Heart left ventricle (tissue), 16 donors: ENCODE measurements at regions of chr17 and their contacts with region 1.

Region 1: GRCh38 chr17:76726231-76726775 is at the start of gene JMJD6:
- DNase-seq: peak; percentile 97 to 98 (median 98)
- ATAC-seq: peak; percentile 93 to 96 (median 95)
- H3K4me3 ChIP-seq: peak within 1 kb of the TSS; percentile 71 to 99 (median 88)
- H3K27ac ChIP-seq: peak within 1 kb of the TSS; percentile 96 to 100 (median 98)
- H3K4me1 ChIP-seq: peaks cover 6 to 73% (median 51%) of the 10 kb centered on the region in 12 donors
- H3K27me3 ChIP-seq: no peaks in the 10 kb centered on the region
- CTCF ChIP-seq: no peak
- POLR2A ChIP-seq: peak; percentile 53 to 90
- total RNA-seq, gene JMJD6: 32.4 to 67.0 (median 39.1) TPM

Region 2: DNA sequence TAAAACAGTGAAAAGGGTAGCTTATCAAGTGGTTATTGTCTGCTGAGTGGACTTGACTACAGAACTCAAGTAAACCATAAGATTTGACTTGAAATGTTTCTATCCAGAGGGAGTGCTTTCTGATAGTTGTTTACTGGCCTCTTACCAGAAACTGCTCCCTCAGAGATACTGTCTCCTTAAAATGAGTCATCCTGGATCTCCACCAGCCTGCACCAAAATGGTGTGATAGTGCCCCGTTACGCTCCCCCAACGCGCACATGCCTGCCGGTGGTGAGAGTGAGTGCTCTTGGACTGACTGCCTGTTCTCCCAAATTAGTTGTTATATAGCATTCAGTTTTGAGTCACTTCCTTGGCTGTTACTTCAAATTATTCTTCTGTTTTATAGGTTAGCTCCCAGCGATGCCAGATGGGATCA is 163.6 kb before region 1 on chr17:
- intact Hi-C with region 1: loop called in 3 of 10 experiments (anchors 5 to 10 kb)
- DNase-seq: peak in 2 of 5 donors; percentile 57 to 59
- ATAC-seq: peak in 3 of 4 donors; percentile 63 to 73 (median 65)
- H3K4me3 ChIP-seq: no peak overlapping the region
- H3K27ac ChIP-seq: peak overlapping the region in 10 of 12 donors; percentile 6 to 84 (median 36)
- H3K4me1 ChIP-seq: peaks cover 5 to 65% (median 43%) of the 10 kb centered on the region in 12 donors
- H3K27me3 ChIP-seq: no peaks in the 10 kb centered on the region
- CTCF ChIP-seq: no peak
- POLR2A ChIP-seq: no peak

Region 3: GRCh38 chr17:76737082-76737675 is 10.9 kb after region 1 on chr17 and contains the start of gene SRSF2:
- intact Hi-C with region 1: loop called in 1 of 10 experiments (anchors 1 kb)
- DNase-seq: peak; percentile 98 to 99 (median 98)
- ATAC-seq: peak; percentile 88 to 94 (median 91)
- H3K4me3 ChIP-seq: peak within 1 kb of the TSS; percentile 71 to 100 (median 94)
- H3K27ac ChIP-seq: peak within 1 kb of the TSS; percentile 97 to 100 (median 99)
- H3K4me1 ChIP-seq: peaks cover 5 to 78% (median 48%) of the 10 kb centered on the region in 12 donors
- H3K27me3 ChIP-seq: no peaks in the 10 kb centered on the region
- CTCF ChIP-seq: no peak
- POLR2A ChIP-seq: peak; percentile 90 to 99
- total RNA-seq, gene SRSF2: 67.0 to 155 (median 79.5) TPM

Region 4: GRCh38 chr17:76781056-76781982 is 55.0 kb after region 1 on chr17:
- intact Hi-C with region 1: loop called in 1 of 10 experiments (anchors 5 kb)
- DNase-seq: no peak
- ATAC-seq: peak in 1 of 4 donors; percentile 36
- H3K4me3 ChIP-seq: no peak overlapping the region
- H3K27ac ChIP-seq: no peak overlapping the region
- H3K4me1 ChIP-seq: no peaks in the 10 kb centered on the region
- H3K27me3 ChIP-seq: no peaks in the 10 kb centered on the region
- CTCF ChIP-seq: peak in 1 of 12 donors; percentile 10
- POLR2A ChIP-seq: no peak